Heart left ventricle (tissue), 16 donors: ENCODE measurements at regions of chr2 and their contacts with region 1.

Region 1: DNA sequence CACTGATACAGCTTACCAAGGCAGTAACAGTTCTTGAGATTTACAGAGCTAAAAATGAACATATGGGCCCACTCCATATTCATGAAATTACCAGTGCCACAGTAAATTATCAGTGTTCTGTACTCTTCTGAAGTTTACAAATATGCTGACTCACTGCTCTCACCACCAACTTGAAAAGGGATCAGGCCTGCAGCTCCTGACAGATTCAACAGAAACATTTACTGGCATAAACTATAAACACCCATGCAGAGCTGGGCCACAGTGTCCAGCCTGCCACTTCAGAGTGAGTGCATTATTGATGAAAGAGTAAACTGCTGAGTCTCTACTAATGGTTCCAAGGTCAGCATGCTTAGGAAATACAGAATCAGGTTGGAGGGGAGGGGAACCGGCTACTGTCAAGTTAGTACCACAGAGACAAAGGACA is 83.1 kb downstream of the FARSB start:
- DNase-seq: peak in 1 of 5 donors; percentile 32
- ATAC-seq: peak; percentile 75 to 88 (median 82)
- H3K4me3 ChIP-seq: no peak overlapping the region
- H3K27ac ChIP-seq: peak overlapping the region in 11 of 12 donors; percentile 20 to 69 (median 55)
- H3K4me1 ChIP-seq: peaks cover 0 to 26% (median 14%) of the 10 kb centered on the region in 12 donors
- H3K27me3 ChIP-seq: no peaks in the 10 kb centered on the region
- CTCF ChIP-seq: no peak
- POLR2A ChIP-seq: no peak

Region 2: GRCh38 chr2:222424729-222425671 is 147.8 kb before region 1 on chr2:
- intact Hi-C with region 1: loop called in 1 of 10 experiments (anchors 10 kb)
- DNase-seq: peak in 2 of 5 donors; percentile 61 to 63
- ATAC-seq: peak; percentile 50 to 70 (median 56)
- H3K4me3 ChIP-seq: peak overlapping the region; percentile 43 to 72 (median 60)
- H3K27ac ChIP-seq: peak overlapping the region in 6 of 12 donors; percentile 7 to 55 (median 18)
- H3K4me1 ChIP-seq: peaks cover 0 to 17% (median 0%) of the 10 kb centered on the region in 12 donors
- H3K27me3 ChIP-seq: peaks cover 0 to 42% (median 10%) of the 10 kb centered on the region in 9 donors
- CTCF ChIP-seq: no peak
- POLR2A ChIP-seq: no peak